ENCODE measurements at regions of chr6 and their contacts with region 1.

Region 1: DNA sequence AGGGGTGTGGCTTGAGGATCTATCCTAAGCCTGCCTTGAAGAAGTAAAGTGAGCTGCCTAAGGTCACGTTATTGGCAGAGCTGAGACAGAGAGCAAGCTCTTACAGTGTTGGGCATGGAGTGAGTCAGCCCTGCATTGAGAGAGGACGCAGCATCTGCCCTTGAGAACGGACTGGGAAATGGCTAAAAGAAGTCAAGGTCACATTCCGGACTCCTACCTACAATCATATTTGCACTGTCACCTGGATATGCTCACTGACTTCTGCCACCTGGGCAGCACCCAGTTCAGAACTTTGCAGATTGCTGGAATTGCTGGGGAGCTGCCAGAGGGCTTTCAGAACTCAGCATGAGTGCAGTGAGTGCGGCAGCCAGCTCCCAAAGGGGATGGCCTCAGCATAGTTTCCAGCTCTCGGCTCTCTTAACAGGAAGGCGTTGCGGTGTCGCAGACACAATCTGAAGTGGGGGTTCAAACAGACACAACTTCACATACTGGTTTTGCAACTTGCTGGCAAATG is 199.3 kb upstream of the SGK1 start:
- DNase-seq: peak; percentile 86

Region 2: DNA sequence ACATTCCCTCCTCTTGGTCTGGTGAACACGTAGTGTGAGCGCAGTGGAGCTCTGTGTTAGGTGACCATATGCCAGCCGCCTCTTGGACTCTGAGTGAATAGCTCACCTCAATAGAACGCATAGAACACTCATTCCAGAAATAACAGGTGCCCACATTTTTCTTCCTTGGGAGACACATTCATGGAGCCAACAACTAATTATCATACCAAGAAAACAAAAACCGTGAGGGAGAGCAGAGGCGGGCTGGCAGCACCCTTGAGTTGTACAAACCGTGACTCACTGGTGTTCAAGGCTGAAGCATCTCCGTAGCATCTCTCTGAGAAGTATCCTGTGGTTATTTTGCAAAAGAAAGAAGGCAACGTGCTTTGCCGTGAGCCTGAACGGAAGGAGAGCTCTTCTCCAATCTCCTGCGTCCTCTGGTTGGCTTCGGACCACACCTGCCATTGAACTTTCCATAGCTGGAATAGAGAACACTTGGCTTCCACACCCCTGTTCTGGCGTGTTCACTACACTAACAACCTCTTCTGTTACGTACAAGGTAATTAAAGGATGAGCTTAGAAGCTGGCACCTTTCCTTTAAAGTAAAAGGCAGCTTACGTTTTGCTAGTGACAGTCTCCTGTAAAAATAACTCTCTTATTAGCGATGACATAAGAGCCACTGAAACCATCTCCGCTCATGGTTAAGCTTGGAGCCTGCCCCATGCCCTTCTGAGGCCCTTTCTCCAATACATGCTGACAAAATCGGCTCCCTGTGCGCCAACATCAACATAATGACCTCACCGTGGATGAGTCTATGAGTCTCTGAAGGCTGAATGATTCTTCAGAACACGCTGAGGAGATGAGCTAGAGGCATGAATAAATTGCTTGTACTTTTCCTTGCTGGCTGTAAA is 169.0 kb before region 1 on chr6:
- intact Hi-C with region 1: loop called (anchors 10 kb)
- DNase-seq: no peak

Region 3: DNA sequence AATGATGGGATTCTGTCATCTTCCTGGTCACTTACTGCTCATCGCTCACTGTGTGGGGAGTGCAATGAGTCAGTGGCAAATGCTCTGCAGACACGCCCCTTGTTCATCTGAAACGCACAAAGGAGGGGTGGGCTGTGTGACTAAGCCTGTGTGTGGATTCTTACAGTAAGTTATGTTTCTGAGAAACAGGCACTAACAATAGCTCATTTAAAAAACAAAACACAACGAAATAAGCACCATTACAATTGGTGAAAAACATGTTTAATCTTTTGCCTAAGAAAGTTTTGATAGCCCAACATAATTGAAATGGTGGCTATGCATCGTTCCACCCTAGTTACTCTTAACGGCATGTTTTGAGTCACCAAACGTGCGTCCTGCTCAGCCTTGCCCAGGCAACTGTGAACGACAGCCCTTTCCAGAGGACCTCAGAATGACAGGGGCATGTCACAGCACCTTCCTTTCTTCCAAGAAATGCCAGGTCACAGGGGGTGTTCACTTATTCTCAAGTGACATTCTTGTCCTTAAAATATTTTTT is 80.9 kb before region 1 on chr6:
- intact Hi-C with region 1: loop called (anchors 5 kb)
- DNase-seq: peak; percentile 79

Region 4: GRCh38 chr6:134529921-134530320 is 12.7 kb after region 1 on chr6:
- intact Hi-C with region 1: loop called (anchors 2 kb)
- DNase-seq: no peak

Region 5: DNA sequence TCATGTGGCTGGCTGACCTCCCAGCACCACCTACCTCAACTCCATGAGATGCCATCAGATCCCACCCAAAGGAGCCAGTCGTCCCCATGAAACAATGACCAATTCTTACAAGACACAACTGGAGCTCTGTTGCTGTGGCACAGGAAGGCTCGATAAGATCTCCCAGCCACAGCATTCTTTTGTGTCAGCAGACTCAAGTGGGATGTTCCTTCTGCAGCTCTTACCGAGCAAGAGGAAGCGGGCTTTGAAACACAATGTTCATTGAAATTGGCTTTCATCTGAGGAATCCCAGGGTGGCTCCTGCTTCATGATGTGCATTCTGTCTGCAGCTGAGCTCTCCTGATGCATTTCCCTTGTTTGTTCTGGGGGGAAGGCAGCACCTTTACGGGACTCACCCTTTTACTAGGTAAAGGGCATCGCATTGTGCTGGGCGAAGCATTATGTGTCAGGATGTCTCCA is 22.7 kb after region 1 on chr6:
- intact Hi-C with region 1: loop called (anchors 1 kb)
- DNase-seq: peak; percentile 76